Activated CD8-positive, alpha-beta T cell treated with anti-CD3 and anti-CD28 coated beads, Interleukin-2, amount 10 ng/mL, durations not matched to agents 7 days and 5 days (primary cell): ENCODE measurements at regions of chr2 and their contacts with region 1.

Region 1: DNA sequence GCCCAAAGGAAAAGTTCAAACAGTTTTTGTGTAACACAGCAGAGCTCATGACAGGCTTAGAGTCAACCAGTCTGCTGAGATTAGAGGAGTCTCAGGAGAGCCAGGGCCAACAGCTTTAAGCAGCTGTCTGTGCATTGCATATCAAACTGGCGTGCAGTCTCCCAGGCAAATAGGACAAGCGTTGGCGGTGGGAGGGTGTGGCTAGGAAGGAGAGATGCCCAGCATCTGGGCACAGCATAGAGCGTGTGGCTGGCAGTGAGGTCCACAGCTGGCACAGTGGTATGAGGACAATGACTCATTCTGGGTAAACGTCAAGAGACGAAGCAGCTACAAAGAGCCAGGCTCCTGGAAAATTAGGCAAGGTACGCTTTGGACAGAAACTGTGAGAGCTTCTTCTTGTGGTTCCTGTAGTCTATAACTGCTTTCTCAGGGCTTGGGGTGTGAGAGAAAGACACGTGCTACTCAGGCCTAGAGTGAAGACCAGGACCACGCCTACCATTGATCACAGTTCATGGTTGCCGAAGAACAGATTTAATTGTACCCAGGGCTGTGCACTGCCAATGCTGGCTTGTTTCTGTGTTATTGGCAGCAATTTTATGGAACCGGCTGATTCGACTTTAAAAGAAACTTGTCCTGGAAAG is 14.8 kb downstream of the ZAP70 start:
- DNase-seq: no peak
- ATAC-seq: peak; percentile 55
- H3K4me3 Mint-ChIP-seq: no peak overlapping the region
- H3K27ac Mint-ChIP-seq: peak overlapping the region; percentile 63
- H3K4me1 Mint-ChIP-seq: peaks cover 60% of the 10 kb centered on the region
- H3K27me3 Mint-ChIP-seq: no peaks in the 10 kb centered on the region

Region 2: DNA sequence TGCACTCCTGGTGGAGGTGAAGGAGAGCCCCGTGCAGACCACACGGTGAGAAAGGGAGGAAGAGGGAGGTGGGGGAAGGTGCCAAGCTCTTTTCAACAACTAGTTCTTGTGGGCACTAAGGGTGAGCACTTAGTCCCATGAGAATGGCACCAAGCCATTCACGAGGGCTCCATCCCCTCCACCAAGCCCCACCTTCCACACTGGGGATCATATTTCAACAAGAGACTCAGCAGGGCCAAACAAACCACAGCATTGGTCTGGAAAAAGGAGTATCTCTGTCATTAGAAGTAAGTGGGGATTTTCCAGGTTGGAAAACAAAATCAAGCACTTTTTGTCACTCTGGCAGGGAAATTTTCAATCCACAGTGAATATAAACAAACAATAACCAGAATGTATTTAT is 23.5 kb after region 1 on chr2:
- CTCF ChIA-PET with region 1: interaction called, 10 read pairs
- POLR2A ChIA-PET with region 1: no interaction called
- DNase-seq: no peak
- ATAC-seq: no peak
- H3K4me3 Mint-ChIP-seq: no peak overlapping the region
- H3K27ac Mint-ChIP-seq: no peak overlapping the region
- H3K4me1 Mint-ChIP-seq: peaks cover 18% of the 10 kb centered on the region
- H3K27me3 Mint-ChIP-seq: no peaks in the 10 kb centered on the region